BJ (cell line): ENCODE measurements at regions of chr9 and their contacts with region 1.

Region 1: GRCh38 chr9:16866587-16866986 is 3.9 kb downstream of the BNC2 start:
- DNase-seq: no peak
- H3K4me3 ChIP-seq: no peak overlapping the region
- H3K27me3 ChIP-seq: no peaks in the 10 kb centered on the region
- CTCF ChIP-seq: no peak

Region 2: DNA sequence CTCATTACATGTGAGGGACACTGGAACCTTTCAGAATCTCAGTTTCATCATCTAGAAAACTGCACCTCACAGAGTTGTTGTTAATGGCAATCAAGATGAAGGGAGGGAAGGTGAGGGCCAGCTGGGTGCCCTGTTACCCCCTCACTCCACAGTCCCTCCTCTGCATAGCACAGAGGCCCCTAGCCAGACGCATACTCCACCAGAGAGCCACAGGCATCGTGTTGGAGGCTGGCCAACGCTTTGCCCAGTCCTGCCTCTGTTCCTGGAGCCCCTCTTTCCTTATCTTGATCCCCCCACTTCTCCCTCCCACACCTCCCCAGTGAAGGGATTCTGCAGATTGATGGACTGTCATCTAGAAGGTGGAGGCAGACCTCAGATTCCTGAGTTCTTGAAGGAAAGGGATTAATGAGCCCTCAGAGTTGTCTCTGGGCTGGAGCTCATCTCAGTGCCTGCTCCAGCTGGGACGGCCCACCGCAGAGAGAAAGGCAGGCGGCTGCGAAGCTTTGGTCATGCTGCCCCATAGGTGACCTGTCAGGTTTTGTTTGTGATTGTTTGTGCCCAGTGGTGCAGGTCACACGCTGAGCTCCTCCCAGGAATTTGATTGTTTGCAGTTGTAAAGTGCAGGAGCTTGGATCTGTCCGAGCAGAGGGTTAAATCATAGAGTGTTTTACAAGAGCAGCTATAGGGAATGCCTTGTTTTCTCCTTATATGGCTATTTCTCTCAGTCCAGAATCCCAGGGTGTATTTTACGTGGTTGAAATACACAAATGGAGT is 826.4 kb before region 1 on chr9:
- CTCF ChIA-PET with region 1: no interaction called
- POLR2A ChIA-PET with region 1: interaction called, 10 read pairs
- DNase-seq: no peak
- H3K4me3 ChIP-seq: no peak overlapping the region
- H3K27me3 ChIP-seq: no peaks in the 10 kb centered on the region
- CTCF ChIP-seq: no peak

Region 3: DNA sequence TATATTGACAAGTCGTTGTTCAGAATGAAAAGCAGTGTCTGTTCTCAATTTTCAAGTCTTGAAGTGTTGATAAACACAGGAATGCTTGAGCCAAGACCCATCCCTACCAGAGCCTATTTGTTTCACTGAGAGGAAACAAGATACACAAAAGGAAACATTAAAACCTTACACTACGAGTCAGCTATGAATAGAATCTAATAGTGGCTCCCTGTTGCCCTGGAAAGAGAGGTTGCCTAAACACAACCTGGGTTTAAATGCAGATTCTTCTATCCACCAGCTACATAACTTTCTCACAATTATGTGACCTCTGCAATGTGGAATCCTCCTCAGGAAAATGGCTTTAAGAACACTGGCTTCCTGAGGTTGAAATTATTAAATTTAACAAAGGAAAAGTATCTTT is 33.0 kb after region 1 on chr9:
- CTCF ChIA-PET with region 1: no interaction called
- POLR2A ChIA-PET with region 1: no interaction called
- DNase-seq: peak; percentile 19
- H3K4me3 ChIP-seq: no peak overlapping the region
- H3K27me3 ChIP-seq: no peaks in the 10 kb centered on the region
- CTCF ChIP-seq: no peak

Region 4: GRCh38 chr9:17165764-17166163 is 299.2 kb after region 1 on chr9:
- CTCF ChIA-PET with region 1: no interaction called
- POLR2A ChIA-PET with region 1: interaction called, 19 read pairs
- DNase-seq: no peak
- H3K4me3 ChIP-seq: no peak overlapping the region
- H3K27me3 ChIP-seq: no peaks in the 10 kb centered on the region
- CTCF ChIP-seq: no peak